ENCODE measurements at regions of chr3 and their contacts with region 1.

Region 1: DNA sequence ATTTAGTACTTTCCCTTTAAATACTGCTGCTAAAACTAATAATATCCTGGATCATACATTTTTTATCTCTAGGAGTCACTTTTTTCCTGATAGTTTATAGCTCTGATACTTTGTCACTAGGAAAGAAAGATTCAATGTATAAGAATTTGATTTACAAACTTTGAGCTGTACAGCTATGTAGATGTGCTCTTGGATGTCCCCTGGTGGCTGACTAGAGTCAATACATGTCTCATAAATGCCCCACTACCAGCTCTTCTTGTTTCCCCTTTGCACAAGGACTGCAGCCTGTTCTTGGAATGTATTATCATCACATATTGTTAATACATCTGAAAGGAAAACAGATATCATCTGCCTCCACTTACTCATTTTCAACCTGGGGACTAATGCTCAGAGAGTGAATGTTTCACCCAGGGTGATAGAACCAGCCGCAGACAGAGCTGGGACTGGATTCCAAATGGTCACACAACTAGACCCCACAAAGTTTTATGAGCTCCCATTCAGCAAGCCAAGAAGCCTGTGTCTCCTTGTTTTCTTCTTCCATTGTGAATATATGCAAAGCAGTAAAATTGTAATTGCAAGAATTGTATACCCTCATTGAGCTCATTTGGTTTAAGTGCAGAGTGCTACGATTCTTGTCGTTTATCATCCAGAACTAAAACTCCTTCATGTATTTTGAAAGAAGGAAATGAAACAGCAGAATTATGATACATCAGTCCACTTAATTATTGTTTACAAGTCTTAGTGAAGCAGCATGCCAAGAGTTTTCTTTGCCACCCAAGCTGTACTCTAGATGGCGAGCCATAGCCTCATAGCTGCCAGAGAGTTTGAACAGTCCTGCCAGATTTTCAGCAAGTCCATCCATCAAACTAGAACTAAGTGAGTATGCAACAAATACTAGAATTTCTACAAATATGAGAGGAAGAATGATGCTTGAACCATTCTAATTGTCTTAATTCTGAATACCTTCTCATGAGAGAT is 261.6 kb upstream of the LMCD1 start:
- DNase-seq: peak; percentile 22
- ATAC-seq: peak; percentile 95
- H3K4me3 Mint-ChIP-seq: no peak overlapping the region
- H3K27ac Mint-ChIP-seq: no peak overlapping the region
- H3K4me1 Mint-ChIP-seq: peaks cover 26% of the 10 kb centered on the region
- H3K27me3 Mint-ChIP-seq: no peaks in the 10 kb centered on the region
- CTCF ChIP-seq: peak; percentile 86

Region 2: GRCh38 chr3:8095724-8096123 is 144.3 kb before region 1 on chr3:
- CTCF ChIA-PET with region 1: interaction called, 31 read pairs
- POLR2A ChIA-PET with region 1: no interaction called
- DNase-seq: peak; percentile 53
- ATAC-seq: peak; percentile 99
- H3K4me3 Mint-ChIP-seq: no peak overlapping the region
- H3K27ac Mint-ChIP-seq: no peak overlapping the region
- H3K4me1 Mint-ChIP-seq: peaks cover 13% of the 10 kb centered on the region
- H3K27me3 Mint-ChIP-seq: no peaks in the 10 kb centered on the region
- CTCF ChIP-seq: no peak

Region 3: GRCh38 chr3:8152821-8153418 is 87.1 kb before region 1 on chr3:
- CTCF ChIA-PET with region 1: interaction called, 15 read pairs
- POLR2A ChIA-PET with region 1: no interaction called
- DNase-seq: no peak
- ATAC-seq: peak; percentile 34; the same call in 1 of the 2 replicates
- H3K4me3 Mint-ChIP-seq: no peak overlapping the region
- H3K27ac Mint-ChIP-seq: no peak overlapping the region
- H3K4me1 Mint-ChIP-seq: peaks cover 5% of the 10 kb centered on the region
- H3K27me3 Mint-ChIP-seq: no peaks in the 10 kb centered on the region
- CTCF ChIP-seq: no peak

Region 4: GRCh38 chr3:8266730-8267131 is 26.7 kb after region 1 on chr3:
- CTCF ChIA-PET with region 1: interaction called, 11 read pairs
- POLR2A ChIA-PET with region 1: no interaction called
- DNase-seq: no peak
- ATAC-seq: peak; percentile 72
- H3K4me3 Mint-ChIP-seq: no peak overlapping the region
- H3K27ac Mint-ChIP-seq: peak overlapping the region; percentile 63
- H3K4me1 Mint-ChIP-seq: peaks cover 45% of the 10 kb centered on the region
- H3K27me3 Mint-ChIP-seq: no peaks in the 10 kb centered on the region
- CTCF ChIP-seq: no peak

Region 5: GRCh38 chr3:8301728-8302462 is 61.9 kb after region 1 on chr3:
- CTCF ChIA-PET with region 1: interaction called, 12 read pairs
- POLR2A ChIA-PET with region 1: no interaction called
- DNase-seq: no peak
- ATAC-seq: peak; percentile 63
- H3K4me3 Mint-ChIP-seq: no peak overlapping the region
- H3K27ac Mint-ChIP-seq: no peak overlapping the region
- H3K4me1 Mint-ChIP-seq: peaks cover 15% of the 10 kb centered on the region
- H3K27me3 Mint-ChIP-seq: no peaks in the 10 kb centered on the region; the same call in 1 of the 2 replicates
- CTCF ChIP-seq: 0 out of 2 replicates have a peak, but pooled peaks have one; percentile 46

Measured in WTC11 (cell line).